Activated naive CD4-positive, alpha-beta T cell treated with anti-CD3 and anti-CD28 coated beads for 36 hours (primary cell): ENCODE measurements at regions of chr3 and their contacts with region 1.

Region 1: GRCh38 chr3:188339410-188340295 is 185.7 kb downstream of the LPP start:
- DNase-seq: peak; percentile 76
- H3K4me3 Mint-ChIP-seq: peak overlapping the region; percentile 59
- H3K27ac Mint-ChIP-seq: peak overlapping the region; percentile 92
- H3K4me1 Mint-ChIP-seq: peaks cover 34% of the 10 kb centered on the region
- H3K27me3 Mint-ChIP-seq: no peaks in the 10 kb centered on the region

Region 2: GRCh38 chr3:187802928-187803259 is 536.8 kb before region 1 on chr3:
- CTCF ChIA-PET with region 1: no interaction called
- intact Hi-C with region 1: loop called (anchors 5 kb)
- DNase-seq: peak; percentile 89
- H3K4me3 Mint-ChIP-seq: peak overlapping the region; percentile 1
- H3K27ac Mint-ChIP-seq: peak overlapping the region; percentile 79
- H3K4me1 Mint-ChIP-seq: peaks cover 95% of the 10 kb centered on the region
- H3K27me3 Mint-ChIP-seq: no peaks in the 10 kb centered on the region

Region 3: GRCh38 chr3:188309437-188310269 is 30.0 kb before region 1 on chr3:
- CTCF ChIA-PET with region 1: no interaction called
- intact Hi-C with region 1: loop called (anchors 1 kb)
- DNase-seq: no peak
- H3K4me3 Mint-ChIP-seq: no peak overlapping the region
- H3K27ac Mint-ChIP-seq: peak overlapping the region; percentile 22
- H3K4me1 Mint-ChIP-seq: peaks cover 25% of the 10 kb centered on the region
- H3K27me3 Mint-ChIP-seq: no peaks in the 10 kb centered on the region

Region 4: DNA sequence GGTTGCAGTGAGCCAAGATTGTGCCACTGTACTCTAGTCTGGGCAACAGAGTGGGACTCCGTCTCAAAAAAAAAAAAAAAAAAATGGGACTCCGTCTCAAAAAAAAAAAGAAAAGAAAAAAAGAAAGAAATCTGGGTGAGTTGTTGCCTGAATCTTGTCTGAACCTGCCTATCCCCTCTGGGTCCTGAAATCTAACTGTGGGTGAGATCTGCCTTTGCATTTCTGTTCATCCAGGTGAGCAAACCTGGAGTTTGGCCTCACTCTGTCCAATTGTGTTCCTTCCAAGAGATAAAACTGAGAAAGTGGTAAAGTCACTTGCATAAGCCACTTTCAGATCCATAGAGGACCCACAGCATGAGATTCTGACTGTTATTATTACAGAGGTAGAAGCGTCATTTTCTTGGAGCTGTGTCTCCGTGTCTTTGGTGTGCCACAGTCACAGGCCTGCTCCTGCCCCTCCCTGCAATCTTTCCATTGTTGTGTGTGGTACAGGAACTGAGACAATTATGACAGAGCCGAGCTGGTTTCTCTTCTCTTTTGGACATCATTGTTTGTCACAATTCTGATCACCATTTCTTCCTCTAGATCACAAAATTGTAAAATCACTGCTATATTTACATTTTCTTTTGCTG is 50.2 kb after region 1 on chr3:
- CTCF ChIA-PET with region 1: no interaction called
- intact Hi-C with region 1: loop called (anchors 1 kb)
- DNase-seq: peak; percentile 85
- H3K4me3 Mint-ChIP-seq: no peak overlapping the region
- H3K27ac Mint-ChIP-seq: peak overlapping the region; percentile 67
- H3K4me1 Mint-ChIP-seq: peaks cover 39% of the 10 kb centered on the region
- H3K27me3 Mint-ChIP-seq: no peaks in the 10 kb centered on the region

Region 5: GRCh38 chr3:188683032-188683521 is 343.4 kb after region 1 on chr3:
- CTCF ChIA-PET with region 1: no interaction called
- intact Hi-C with region 1: loop called (anchors 1 kb)
- DNase-seq: peak; percentile 51
- H3K4me3 Mint-ChIP-seq: no peak overlapping the region
- H3K27ac Mint-ChIP-seq: peak overlapping the region; percentile 37
- H3K4me1 Mint-ChIP-seq: peaks cover 32% of the 10 kb centered on the region
- H3K27me3 Mint-ChIP-seq: no peaks in the 10 kb centered on the region

Region 6: GRCh38 chr3:189148081-189148507 is 808.4 kb after region 1 on chr3:
- CTCF ChIA-PET with region 1: no interaction called
- intact Hi-C with region 1: loop called (anchors 5 kb)
- DNase-seq: peak; percentile 85
- H3K4me3 Mint-ChIP-seq: no peak overlapping the region
- H3K27ac Mint-ChIP-seq: no peak overlapping the region
- H3K4me1 Mint-ChIP-seq: peaks cover 9% of the 10 kb centered on the region
- H3K27me3 Mint-ChIP-seq: peaks cover 9% of the 10 kb centered on the region